ENCODE measurements at regions of chr6 and their contacts with region 1.

Region 1: GRCh38 chr6:125974214-125974866 is 12.0 kb upstream of the TRMT11 start:
- DNase-seq: no peak
- ATAC-seq: peak; percentile 58
- H3K4me3 Mint-ChIP-seq: no peak overlapping the region
- H3K27ac Mint-ChIP-seq: peak overlapping the region; percentile 5
- H3K4me1 Mint-ChIP-seq: peaks cover 15% of the 10 kb centered on the region
- H3K27me3 Mint-ChIP-seq: no peaks in the 10 kb centered on the region
- CTCF ChIP-seq: no peak

Region 2: DNA sequence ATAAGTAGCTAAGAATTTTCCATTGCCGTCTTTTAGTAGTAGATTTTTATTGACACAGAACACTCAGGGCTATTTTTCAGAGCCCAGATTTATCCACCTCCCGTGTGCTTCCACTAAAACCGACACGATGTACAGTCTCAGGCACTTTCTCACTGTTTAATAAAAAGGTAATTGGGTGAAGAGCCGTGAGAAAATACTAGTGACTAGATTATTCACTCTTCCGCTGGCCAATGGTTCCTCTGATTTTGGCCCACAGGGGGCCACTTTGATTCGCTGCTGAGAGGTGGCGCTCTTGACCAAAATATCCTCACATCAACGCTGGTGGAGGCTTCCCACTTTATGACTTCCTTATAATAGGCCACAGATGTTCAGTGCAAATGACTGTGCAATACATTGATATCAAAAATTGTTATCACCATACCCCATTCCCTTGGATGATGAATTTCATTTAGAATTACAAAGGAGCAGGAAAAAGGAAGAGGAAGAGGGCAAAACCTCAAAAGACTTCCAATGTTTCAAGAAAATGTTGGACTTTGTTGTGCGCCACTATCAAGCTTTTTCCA is 660.2 kb before region 1 on chr6:
- CTCF ChIA-PET with region 1: interaction called, 50 read pairs
- POLR2A ChIA-PET with region 1: no interaction called
- intact Hi-C with region 1: loop called (anchors 1 kb)
- DNase-seq: no peak
- ATAC-seq: peak; percentile 83
- H3K4me3 Mint-ChIP-seq: no peak overlapping the region
- H3K27ac Mint-ChIP-seq: no peak overlapping the region
- H3K4me1 Mint-ChIP-seq: peaks cover 2% of the 10 kb centered on the region
- H3K27me3 Mint-ChIP-seq: peaks cover 6% of the 10 kb centered on the region
- CTCF ChIP-seq: peak; percentile 70

Region 3: GRCh38 chr6:125623085-125623484 is 351.3 kb before region 1 on chr6:
- CTCF ChIA-PET with region 1: no interaction called
- POLR2A ChIA-PET with region 1: no interaction called
- intact Hi-C with region 1: no loop called
- DNase-seq: no peak
- ATAC-seq: no peak
- H3K4me3 Mint-ChIP-seq: no peak overlapping the region
- H3K27ac Mint-ChIP-seq: no peak overlapping the region
- H3K4me1 Mint-ChIP-seq: no peaks in the 10 kb centered on the region
- H3K27me3 Mint-ChIP-seq: peaks cover 17% of the 10 kb centered on the region
- CTCF ChIP-seq: no peak

Region 4: DNA sequence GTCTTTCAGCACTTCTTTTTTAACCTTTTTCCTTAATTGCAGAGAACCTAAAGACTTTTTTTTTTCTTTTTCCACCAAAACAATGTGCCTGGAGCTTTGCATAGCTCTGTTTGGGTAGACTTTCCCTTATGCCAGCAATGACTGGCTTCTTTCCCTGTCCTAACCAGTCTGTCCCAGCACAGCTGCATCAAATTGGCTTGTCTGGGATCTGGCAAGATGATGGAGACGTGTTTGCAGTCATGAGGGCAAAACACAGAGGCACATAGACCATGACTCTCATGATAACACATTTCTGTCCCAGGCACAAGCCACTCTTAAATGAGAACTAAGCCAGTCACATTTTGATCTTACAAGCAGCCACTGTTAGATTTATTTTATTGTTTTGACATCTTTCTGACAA is 208.4 kb before region 1 on chr6:
- CTCF ChIA-PET with region 1: interaction called, 4 read pairs
- POLR2A ChIA-PET with region 1: no interaction called
- intact Hi-C with region 1: loop called (anchors 1 kb)
- DNase-seq: no peak
- ATAC-seq: no peak
- H3K4me3 Mint-ChIP-seq: no peak overlapping the region
- H3K27ac Mint-ChIP-seq: no peak overlapping the region
- H3K4me1 Mint-ChIP-seq: peaks cover 3% of the 10 kb centered on the region
- H3K27me3 Mint-ChIP-seq: peaks cover 24% of the 10 kb centered on the region
- CTCF ChIP-seq: no peak

Region 5: GRCh38 chr6:125790358-125791150 is 183.8 kb before region 1 on chr6 and contains the start of gene NCOA7:
- CTCF ChIA-PET with region 1: interaction called, 52 read pairs
- POLR2A ChIA-PET with region 1: interaction called, 6 read pairs
- intact Hi-C with region 1: loop called (anchors 1 kb)
- DNase-seq: peak; percentile 74
- ATAC-seq: peak; percentile 79
- H3K4me3 Mint-ChIP-seq: peak within 1 kb of the TSS; percentile 89
- H3K27ac Mint-ChIP-seq: peak within 1 kb of the TSS; percentile 95
- H3K4me1 Mint-ChIP-seq: peaks cover 50% of the 10 kb centered on the region
- H3K27me3 Mint-ChIP-seq: no peaks in the 10 kb centered on the region
- CTCF ChIP-seq: no peak
- total RNA-seq, gene NCOA7: 29.2 and 33.4 TPM in 2 replicates

Region 6: DNA sequence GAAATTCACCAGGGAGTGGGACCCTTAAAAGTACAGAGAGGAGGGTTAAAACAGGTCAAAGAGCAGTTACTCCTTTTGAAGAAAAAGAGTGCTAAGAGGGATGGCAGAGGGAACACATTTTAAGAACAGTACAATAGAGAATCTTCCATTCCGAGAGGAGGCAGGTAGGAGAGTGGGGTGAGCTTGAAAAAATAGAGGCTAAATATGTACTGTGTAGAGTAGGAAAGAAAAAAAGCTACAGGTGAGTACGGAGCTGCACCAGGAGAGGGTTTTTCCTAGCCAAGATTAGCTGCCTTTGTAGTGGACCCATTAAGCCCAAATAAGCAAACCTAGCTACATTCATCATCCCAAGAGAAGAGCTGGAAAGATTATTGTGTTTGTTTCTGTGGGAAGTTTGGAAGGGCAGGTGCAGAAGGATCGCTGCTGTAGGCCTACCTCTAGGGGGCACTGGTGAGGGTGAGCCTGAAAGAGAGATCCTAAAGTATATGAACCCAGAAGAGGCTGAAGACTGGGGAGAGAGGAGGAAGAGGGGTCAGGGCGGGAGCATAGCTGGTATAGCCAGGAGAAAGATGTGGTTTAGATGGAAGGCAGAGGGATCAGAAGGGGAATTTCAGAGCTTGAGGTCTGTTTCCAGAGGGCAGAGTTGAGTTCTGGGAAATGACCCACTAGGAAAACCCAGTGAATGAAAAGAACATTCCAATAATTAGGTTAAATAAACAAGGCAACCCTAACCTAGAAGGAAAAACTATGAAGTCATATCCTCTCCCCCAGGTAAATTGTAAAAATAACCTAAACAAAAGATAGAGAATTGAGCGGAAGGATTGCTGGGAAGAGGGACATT is 68.0 kb before region 1 on chr6:
- CTCF ChIA-PET with region 1: interaction called, 3 read pairs
- POLR2A ChIA-PET with region 1: no interaction called
- intact Hi-C with region 1: loop called (anchors 1 kb)
- DNase-seq: peak; percentile 23
- ATAC-seq: peak; percentile 75
- H3K4me3 Mint-ChIP-seq: no peak overlapping the region
- H3K27ac Mint-ChIP-seq: no peak overlapping the region
- H3K4me1 Mint-ChIP-seq: peaks cover 4% of the 10 kb centered on the region
- H3K27me3 Mint-ChIP-seq: no peaks in the 10 kb centered on the region
- CTCF ChIP-seq: no peak